GM13977 (cell line): ENCODE measurements at regions of chr6 and their contacts with region 1.

Region 1: GRCh38 chr6:3052481-3053230 is 15.6 kb upstream of the RIPK1 start:
- DNase-seq: no peak
- CTCF ChIP-seq: no peak

Region 2: GRCh38 chr6:2770171-2770570 is 282.5 kb before region 1 on chr6:
- in situ Hi-C with region 1: loop called (anchors 10 kb)
- DNase-seq: no peak
- CTCF ChIP-seq: no peak

Region 3: GRCh38 chr6:2989332-2990247 is 63.1 kb before region 1 on chr6:
- in situ Hi-C with region 1: loop called (anchors 5 kb)
- DNase-seq: peak; percentile 82
- CTCF ChIP-seq: no peak